ENCODE measurements at regions of chr3 and their contacts with region 1.

Region 1: GRCh38 chr3:184561061-184561912 is at the start of gene EPHB3:
- DNase-seq: peak; percentile 96 to 98 (median 98)
- H3K4me3 ChIP-seq: peak within 1 kb of the TSS; percentile 13 to 70 (median 54)
- H3K27ac ChIP-seq: no peak within 1 kb of the TSS
- H3K4me1 ChIP-seq: peaks cover 0 to 17% (median 14%) of the 10 kb centered on the region in 4 experiments
- H3K27me3 ChIP-seq: peaks cover 0 to 65% (median 15%) of the 10 kb centered on the region in 5 experiments

Region 2: DNA sequence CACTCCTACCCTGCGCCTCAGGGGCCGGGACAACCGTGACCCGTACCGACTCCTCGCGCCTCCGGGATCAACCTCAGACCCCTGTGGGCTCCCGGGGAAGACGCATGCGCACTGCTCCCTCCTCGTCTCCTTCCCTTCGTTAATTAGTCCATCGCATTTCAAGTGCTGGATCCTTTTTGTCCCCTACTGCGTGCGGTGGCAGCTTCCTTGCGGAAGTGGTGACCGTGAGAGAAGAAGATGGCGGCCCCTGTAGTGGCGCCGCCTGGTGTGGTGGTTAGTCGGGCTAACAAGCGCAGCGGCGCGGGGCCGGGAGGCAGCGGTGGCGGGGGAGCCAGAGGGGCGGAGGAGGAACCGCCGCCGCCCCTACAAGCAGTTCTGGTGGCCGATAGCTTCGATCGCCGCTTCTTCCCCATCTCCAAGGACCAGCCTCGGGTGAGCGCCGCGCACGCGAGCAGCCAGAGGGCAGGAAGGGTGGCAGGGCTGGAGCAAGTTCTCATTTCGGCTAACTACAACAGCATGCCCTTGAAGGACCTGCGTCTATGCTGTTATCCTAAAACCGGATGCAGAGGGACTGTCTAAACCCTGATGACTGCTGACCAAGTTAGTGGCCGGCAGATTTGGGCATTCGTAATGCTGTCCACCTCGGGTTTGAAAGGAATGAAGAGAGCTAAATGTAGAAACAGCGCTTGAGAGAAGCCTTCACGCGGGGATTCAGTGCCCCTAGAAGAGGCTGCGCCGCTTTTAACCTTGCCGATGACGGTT is 426.0 kb before region 1 on chr3 and contains the start of gene EIF2B5:
- CTCF ChIA-PET with region 1: no interaction called
- POLR2A ChIA-PET with region 1: no interaction called
- DNase-seq: peak; percentile 95 to 96 (median 96)
- H3K4me3 ChIP-seq: peak within 1 kb of the TSS; percentile 78 to 99 (median 98)
- H3K27ac ChIP-seq: peak within 1 kb of the TSS; percentile 56 to 92
- H3K4me1 ChIP-seq: peaks cover 14 to 29% (median 21%) of the 10 kb centered on the region in 4 experiments
- H3K27me3 ChIP-seq: no peaks in the 10 kb centered on the region

Region 3: GRCh38 chr3:184361520-184361931 is 199.8 kb before region 1 on chr3 and contains the starts of genes CLCN2 and POLR2H:
- CTCF ChIA-PET with region 1: no interaction called
- POLR2A ChIA-PET with region 1: no interaction called
- DNase-seq: no peak
- H3K4me3 ChIP-seq: peak within 1 kb of the TSS; percentile 54 to 92 (median 74)
- H3K27ac ChIP-seq: peak within 1 kb of the TSS in 1 of 2 experiments; percentile 77
- H3K4me1 ChIP-seq: peaks cover 0 to 33% (median 31%) of the 10 kb centered on the region in 4 experiments
- H3K27me3 ChIP-seq: peaks cover 0 to 3% (median 0%) of the 10 kb centered on the region in 5 experiments

Region 4: DNA sequence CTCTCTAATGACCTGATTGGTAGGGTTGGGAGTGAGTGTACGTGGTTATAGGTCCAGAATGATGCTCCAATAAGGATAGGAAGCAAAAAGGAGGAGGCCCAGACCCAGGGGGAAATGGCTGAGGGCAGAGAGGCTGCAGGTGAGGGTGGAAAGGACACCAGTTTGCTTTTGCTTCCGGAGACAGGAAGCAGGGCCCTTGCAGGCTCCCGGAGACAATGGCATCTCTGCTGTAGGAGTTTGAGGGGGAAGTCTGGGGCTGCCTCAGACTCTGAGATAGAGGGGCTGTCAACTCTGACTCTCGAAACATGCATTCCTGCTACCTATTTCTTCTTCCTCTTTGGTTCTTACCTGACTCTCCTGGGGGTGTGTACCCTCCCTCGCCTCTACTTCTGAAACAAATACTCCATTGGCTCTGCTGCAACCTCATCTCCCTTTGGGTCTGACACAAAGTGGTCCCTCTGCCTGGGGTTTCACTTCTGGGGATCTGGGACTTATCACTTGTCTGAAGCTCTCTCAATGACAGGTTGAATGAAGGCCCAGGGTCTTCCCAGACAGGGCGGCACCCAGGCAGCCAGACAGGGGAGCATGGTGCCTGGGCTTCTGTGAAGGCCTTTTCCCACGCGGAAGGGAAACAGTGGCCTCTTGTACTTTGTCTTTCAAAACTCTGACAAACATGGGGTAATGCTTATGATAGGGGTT is 119.9 kb before region 1 on chr3:
- CTCF ChIA-PET with region 1: no interaction called
- POLR2A ChIA-PET with region 1: no interaction called
- DNase-seq: peak in 2 of 3 donors; percentile 24 to 47
- H3K4me3 ChIP-seq: no peak overlapping the region
- H3K27ac ChIP-seq: no peak overlapping the region
- H3K4me1 ChIP-seq: peaks cover 0 to 12% (median 4%) of the 10 kb centered on the region in 4 experiments
- H3K27me3 ChIP-seq: no peaks in the 10 kb centered on the region

Region 5: GRCh38 chr3:184740524-184741484 is 179.5 kb after region 1 on chr3:
- CTCF ChIA-PET with region 1: interaction called, 11 read pairs
- POLR2A ChIA-PET with region 1: interaction called, 3 read pairs
- DNase-seq: peak; percentile 7 to 62 (median 41)
- H3K4me3 ChIP-seq: no peak overlapping the region
- H3K27ac ChIP-seq: no peak overlapping the region
- H3K4me1 ChIP-seq: peaks cover 0 to 4% (median 0%) of the 10 kb centered on the region in 4 experiments
- H3K27me3 ChIP-seq: peaks cover 0 to 1% (median 0%) of the 10 kb centered on the region in 5 experiments

Region 6: DNA sequence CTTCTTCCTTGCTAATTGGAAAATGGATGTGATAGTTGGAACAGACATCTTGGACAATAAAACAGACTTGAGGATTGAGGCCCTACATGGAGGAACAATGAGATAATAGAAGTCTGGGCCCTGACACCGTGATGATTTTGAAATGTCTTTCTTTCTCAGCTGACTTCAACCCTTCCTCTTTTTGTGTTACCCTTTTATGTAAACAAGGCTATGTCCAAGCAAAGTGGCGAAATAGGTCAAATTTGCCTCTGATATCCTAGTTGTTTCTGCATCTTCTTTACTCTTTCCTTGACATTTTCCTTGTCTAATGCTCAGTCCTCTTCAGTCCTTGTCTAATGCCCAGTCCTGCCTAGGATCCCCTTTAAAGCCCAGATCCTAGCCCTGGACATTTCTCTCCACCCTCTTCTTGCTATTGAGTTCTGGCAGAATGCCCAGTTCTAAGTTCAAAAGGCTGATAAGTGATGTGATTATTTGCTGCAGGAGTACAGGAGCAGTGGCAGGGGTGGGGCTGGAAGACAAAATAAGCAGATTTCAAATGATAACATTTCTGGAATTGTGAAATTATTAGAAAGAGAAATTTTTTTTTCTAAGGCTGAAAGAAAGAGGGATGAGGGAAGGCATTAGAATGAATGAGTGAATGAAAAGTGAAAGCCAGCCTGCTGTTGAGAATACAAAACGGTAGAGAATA is 244.2 kb after region 1 on chr3:
- CTCF ChIA-PET with region 1: interaction called, 10 read pairs
- POLR2A ChIA-PET with region 1: no interaction called
- DNase-seq: peak in 2 of 3 donors; percentile 30 to 33
- H3K4me3 ChIP-seq: no peak overlapping the region
- H3K27ac ChIP-seq: no peak overlapping the region
- H3K4me1 ChIP-seq: peaks cover 6 to 26% (median 12%) of the 10 kb centered on the region in 4 experiments
- H3K27me3 ChIP-seq: no peaks in the 10 kb centered on the region

Region 7: GRCh38 chr3:184899953-184900595 is 338.8 kb after region 1 on chr3:
- CTCF ChIA-PET with region 1: no interaction called
- POLR2A ChIA-PET with region 1: no interaction called
- DNase-seq: no peak
- H3K4me3 ChIP-seq: no peak overlapping the region
- H3K27ac ChIP-seq: no peak overlapping the region
- H3K4me1 ChIP-seq: no peaks in the 10 kb centered on the region
- H3K27me3 ChIP-seq: no peaks in the 10 kb centered on the region